Psoas muscle (tissue), 8 donors: ENCODE measurements at regions of chr11 and their contacts with region 1.

Region 1: GRCh38 chr11:93652161-93652597 is 9.3 kb upstream of the CEP295 start:
- DNase-seq: no peak
- ATAC-seq: no peak
- H3K4me3 ChIP-seq: no peak overlapping the region
- H3K27ac ChIP-seq: no peak overlapping the region
- H3K4me1 ChIP-seq: no peaks in the 10 kb centered on the region
- H3K27me3 ChIP-seq: no peaks in the 10 kb centered on the region
- CTCF ChIP-seq: peak; percentile 76

Region 2: GRCh38 chr11:93234602-93235207 is 417.5 kb before region 1 on chr11:
- intact Hi-C with region 1: loop called (anchors 1 to 5 kb)
- DNase-seq: peak; percentile 66 to 75
- ATAC-seq: peak; percentile 97 to 99 (median 98)
- H3K4me3 ChIP-seq: no peak overlapping the region
- H3K27ac ChIP-seq: no peak overlapping the region
- H3K4me1 ChIP-seq: no peaks in the 10 kb centered on the region
- H3K27me3 ChIP-seq: peaks cover 0 to 3% (median 0%) of the 10 kb centered on the region in 3 donors
- CTCF ChIP-seq: peak; percentile 92

Region 3: GRCh38 chr11:94077552-94078293 is 425.5 kb after region 1 on chr11:
- intact Hi-C with region 1: no loop called
- DNase-seq: no peak
- ATAC-seq: no peak
- H3K4me3 ChIP-seq: no peak overlapping the region
- H3K27ac ChIP-seq: no peak overlapping the region
- H3K4me1 ChIP-seq: no peaks in the 10 kb centered on the region
- H3K27me3 ChIP-seq: no peaks in the 10 kb centered on the region
- CTCF ChIP-seq: no peak